HCT116 (cell line): ENCODE measurements at regions of chr4 and their contacts with region 1.

Region 1: DNA sequence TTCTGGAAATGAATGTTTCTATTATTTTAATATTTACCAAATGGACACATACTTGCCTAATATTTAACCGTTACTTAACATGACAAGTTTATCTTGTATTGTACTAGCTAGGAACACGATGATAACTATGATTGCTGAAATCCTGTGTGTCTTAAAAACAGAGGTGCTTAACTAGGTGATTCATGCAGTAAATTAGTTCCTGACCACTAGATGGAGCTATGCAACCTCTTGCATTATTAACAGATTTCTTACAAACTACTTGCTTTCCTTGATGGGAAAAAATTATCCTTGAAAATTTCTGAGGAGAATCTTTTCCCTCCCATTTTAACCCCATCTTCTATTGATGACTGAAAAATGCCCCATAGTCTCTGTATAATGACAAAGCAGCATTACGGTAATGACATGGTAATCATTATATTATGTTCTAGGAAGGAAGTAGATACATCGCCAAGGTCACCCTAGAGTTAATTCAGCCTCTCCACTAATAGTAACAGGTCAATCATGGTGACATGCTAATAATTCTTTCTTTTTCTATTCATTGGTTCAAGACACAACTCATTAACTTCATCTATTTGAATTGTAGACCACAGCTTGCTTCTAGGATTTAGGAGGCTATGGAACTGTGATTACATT is 844.2 kb downstream of the RAPGEF2 start:
- DNase-seq: peak; percentile 70
- ATAC-seq: peak; percentile 73
- H3K4me3 ChIP-seq: no peak overlapping the region
- H3K27ac ChIP-seq: no peak overlapping the region
- H3K4me1 ChIP-seq: no peaks in the 10 kb centered on the region
- H3K27me3 ChIP-seq: no peaks in the 10 kb centered on the region
- CTCF ChIP-seq: peak; percentile 55 to 87 (median 66); a peak in 5 of 6 replicates
- POLR2A ChIP-seq: no peak
- RAD21 ChIP-seq: peak; percentile 82

Region 2: GRCh38 chr4:159487284-159487747 is 459.8 kb before region 1 on chr4:
- CTCF ChIA-PET with region 1: no interaction called
- POLR2A ChIA-PET with region 1: no interaction called
- RAD21 ChIA-PET with region 1: no interaction called
- intact Hi-C with region 1: loop called (anchors 5 kb)
- DNase-seq: peak; percentile 65
- ATAC-seq: peak; percentile 97
- H3K4me3 ChIP-seq: 0 out of 4 replicates have a peak overlapping the region, but pooled peaks have one; percentile 7 to 23
- H3K27ac ChIP-seq: no peak overlapping the region
- H3K4me1 ChIP-seq: peaks cover 0 to 4% of the 10 kb centered on the region in 2 experiments; a peak in 1 of 4 replicates
- H3K27me3 ChIP-seq: no peaks in the 10 kb centered on the region
- CTCF ChIP-seq: peak; percentile 45 to 90 (median 74); a peak in 5 of 6 replicates
- POLR2A ChIP-seq: no peak
- RAD21 ChIP-seq: peak; percentile 91

Region 3: DNA sequence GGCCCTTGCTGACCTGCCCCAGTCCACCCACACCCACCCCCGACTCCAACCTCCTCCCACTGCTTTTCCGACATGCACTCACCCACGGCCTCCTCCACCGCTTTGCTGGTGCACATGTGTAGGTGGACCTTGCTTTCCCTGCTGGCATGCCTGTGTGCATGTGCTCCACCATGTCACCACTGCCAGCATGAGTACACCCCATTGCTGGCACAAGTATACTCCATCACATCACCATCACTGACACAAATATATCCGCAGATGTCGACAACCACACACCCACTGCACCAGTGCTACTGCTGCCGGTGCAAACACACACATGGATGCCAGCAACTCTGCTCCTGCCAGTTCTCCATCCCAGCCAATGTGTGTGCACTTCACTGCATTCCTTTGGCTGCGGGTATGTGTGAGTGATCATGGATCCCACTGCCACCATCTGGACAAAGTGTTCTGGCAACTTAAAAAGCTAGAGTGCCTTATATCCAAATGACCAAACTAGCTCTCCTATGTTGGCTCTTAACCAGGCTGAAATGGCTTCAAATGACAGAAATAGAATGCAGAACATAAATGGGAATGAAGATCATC is 228.1 kb after region 1 on chr4:
- CTCF ChIA-PET with region 1: interaction called, 6 read pairs
- POLR2A ChIA-PET with region 1: no interaction called
- RAD21 ChIA-PET with region 1: no interaction called
- intact Hi-C with region 1: loop called (anchors 5 kb)
- DNase-seq: peak; percentile 18
- ATAC-seq: peak; percentile 87
- H3K4me3 ChIP-seq: no peak overlapping the region
- H3K27ac ChIP-seq: no peak overlapping the region
- H3K4me1 ChIP-seq: peaks cover 0 to 8% of the 10 kb centered on the region in 2 experiments; a peak in 2 of 4 replicates
- H3K27me3 ChIP-seq: no peaks in the 10 kb centered on the region
- CTCF ChIP-seq: peak; percentile 12 to 18 (median 14); a peak in 2 of 6 replicates
- POLR2A ChIP-seq: no peak
- RAD21 ChIP-seq: peak; percentile 62

Region 4: DNA sequence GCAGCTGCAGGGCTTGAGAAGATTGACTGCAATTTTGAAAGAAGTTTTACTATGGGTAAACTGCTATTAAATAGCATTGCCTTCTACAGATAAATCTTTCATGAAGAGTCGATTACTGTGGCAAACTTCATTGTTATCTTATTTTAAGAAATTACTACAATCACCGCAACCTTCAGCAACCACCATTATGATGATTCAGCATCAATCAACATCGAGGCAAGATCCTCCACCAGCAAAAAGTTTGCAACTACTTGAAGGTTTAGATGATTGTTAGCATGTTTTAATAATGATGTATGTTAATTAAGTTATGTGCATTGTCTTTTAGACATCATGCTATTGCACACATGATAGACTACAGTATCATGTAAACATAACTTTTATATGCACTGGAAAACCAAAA is 705.7 kb after region 1 on chr4:
- CTCF ChIA-PET with region 1: no interaction called
- POLR2A ChIA-PET with region 1: no interaction called
- RAD21 ChIA-PET with region 1: no interaction called
- intact Hi-C with region 1: loop called (anchors 10 kb)
- DNase-seq: no peak
- ATAC-seq: no peak
- H3K4me3 ChIP-seq: no peak overlapping the region
- H3K27ac ChIP-seq: no peak overlapping the region
- H3K4me1 ChIP-seq: no peaks in the 10 kb centered on the region
- H3K27me3 ChIP-seq: no peaks in the 10 kb centered on the region
- CTCF ChIP-seq: no peak
- POLR2A ChIP-seq: no peak
- RAD21 ChIP-seq: no peak